GM10248 (cell line): ENCODE measurements at regions of chr17 and their contacts with region 1.

Region 1: DNA sequence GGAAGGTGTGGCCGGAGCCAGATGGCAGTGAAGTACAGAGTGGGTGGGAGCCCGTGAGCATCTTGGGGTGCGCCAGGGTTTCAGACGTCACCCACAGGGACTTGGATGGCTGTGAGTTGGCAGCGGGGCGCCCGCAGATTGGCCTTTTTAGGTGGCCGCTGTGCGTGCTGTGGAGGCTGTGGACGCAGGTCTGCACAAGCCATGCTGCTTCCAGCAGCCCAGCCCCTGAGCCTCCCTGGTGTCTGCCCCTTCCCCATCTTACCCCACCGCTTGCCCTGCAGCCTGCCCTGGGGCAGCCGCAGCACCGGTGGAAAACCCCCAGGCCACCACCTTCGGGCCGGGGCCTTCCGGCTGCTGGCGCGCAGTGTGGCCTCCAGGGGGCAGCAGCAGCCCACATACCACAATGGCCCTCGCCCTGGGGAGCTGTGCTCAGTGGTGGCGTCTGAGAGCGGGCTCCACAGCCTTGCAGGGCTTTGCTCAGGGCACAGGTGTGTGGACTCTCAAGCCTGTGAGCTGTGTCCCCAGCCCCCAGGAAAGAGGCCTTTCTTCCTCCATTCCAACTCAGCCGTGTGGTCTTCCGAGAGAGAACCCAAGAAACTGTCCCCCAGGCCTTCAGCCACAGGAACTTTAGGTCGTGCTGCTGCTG is 11.8 kb downstream of the ENDOV start:
- DNase-seq: peak; percentile 95
- CTCF ChIP-seq: peak; percentile 96

Region 2: GRCh38 chr17:79607940-79608623 is 818.7 kb before region 1 on chr17:
- CTCF ChIA-PET with region 1: no interaction called
- POLR2A ChIA-PET with region 1: no interaction called
- DNase-seq: no peak
- CTCF ChIP-seq: no peak

Region 3: DNA sequence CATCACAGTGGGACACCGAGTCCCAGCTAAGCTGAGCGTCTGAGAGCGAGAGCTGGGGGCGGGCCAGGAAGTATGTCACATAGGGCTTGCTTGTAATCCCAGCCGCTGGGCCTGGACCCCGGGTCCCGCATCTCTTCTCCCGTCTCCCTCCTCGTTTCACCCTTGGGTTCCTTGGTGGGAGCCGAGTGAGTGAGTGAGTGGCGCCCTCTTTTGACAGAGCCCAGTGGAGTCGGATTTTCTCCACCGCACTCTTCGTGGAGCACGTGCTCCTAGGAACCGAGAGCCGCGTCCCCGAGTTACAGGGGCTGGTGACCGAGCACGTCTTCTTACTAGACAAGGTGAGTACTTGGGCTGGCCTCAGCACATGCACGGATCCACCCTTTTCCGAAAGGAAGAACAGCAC is 62.6 kb before region 1 on chr17:
- CTCF ChIA-PET with region 1: no interaction called
- POLR2A ChIA-PET with region 1: no interaction called
- DNase-seq: no peak
- CTCF ChIP-seq: peak; percentile 23

Region 4: GRCh38 chr17:80414803-80415625 is 11.8 kb before region 1 on chr17 and contains the start of gene ENDOV:
- CTCF ChIA-PET with region 1: interaction called, 11 read pairs
- POLR2A ChIA-PET with region 1: no interaction called
- DNase-seq: peak; percentile 100
- CTCF ChIP-seq: no peak

Region 5: GRCh38 chr17:80454557-80455335 is 27.9 kb after region 1 on chr17:
- CTCF ChIA-PET with region 1: interaction called, 12 read pairs
- POLR2A ChIA-PET with region 1: no interaction called
- DNase-seq: peak; percentile 99
- CTCF ChIP-seq: no peak

Region 6: DNA sequence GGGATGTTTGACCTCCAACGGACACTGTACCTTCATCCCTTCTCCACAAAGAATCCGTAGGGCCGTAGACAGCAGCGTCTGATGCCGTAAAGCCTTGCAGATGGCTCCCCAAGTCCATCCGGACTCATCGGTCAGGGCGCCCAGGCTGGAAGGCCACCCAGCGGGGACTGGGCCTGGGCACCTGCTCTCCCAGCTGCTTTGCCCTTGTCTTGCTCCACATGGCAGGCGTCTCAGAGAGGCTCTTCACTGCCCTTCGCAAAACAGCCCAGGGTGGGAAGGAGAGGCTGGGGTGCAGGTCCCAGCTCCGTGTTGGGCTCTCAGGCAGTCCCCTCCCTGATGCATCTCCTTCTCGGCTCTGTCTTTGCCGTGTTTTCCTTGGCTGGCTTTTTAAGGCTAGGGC is 111.7 kb after region 1 on chr17:
- CTCF ChIA-PET with region 1: no interaction called
- POLR2A ChIA-PET with region 1: no interaction called
- DNase-seq: no peak
- CTCF ChIP-seq: no peak

Region 7: GRCh38 chr17:80970044-80970761 is 543.4 kb after region 1 on chr17:
- CTCF ChIA-PET with region 1: interaction called, 47 read pairs
- POLR2A ChIA-PET with region 1: no interaction called
- DNase-seq: peak; percentile 82
- CTCF ChIP-seq: peak; percentile 60

Region 8: GRCh38 chr17:80984749-80985148 is 557.9 kb after region 1 on chr17:
- CTCF ChIA-PET with region 1: interaction called, 17 read pairs
- POLR2A ChIA-PET with region 1: no interaction called
- DNase-seq: no peak
- CTCF ChIP-seq: no peak